Activated CD8-positive, alpha-beta memory T cell treated with anti-CD3 and anti-CD28 coated beads, Interleukin-2, amount 10 ng/mL, durations not matched to agents 7 days and 5 days (primary cell): ENCODE measurements at regions of chr13 and their contacts with region 1.

Region 1: GRCh38 chr13:49922301-49922700 is 13.8 kb downstream of the SPRYD7 start:
- DNase-seq: no peak
- ATAC-seq: no peak
- H3K4me3 Mint-ChIP-seq: no peak overlapping the region
- H3K27ac Mint-ChIP-seq: no peak overlapping the region
- H3K4me1 Mint-ChIP-seq: no peaks in the 10 kb centered on the region
- H3K27me3 Mint-ChIP-seq: no peaks in the 10 kb centered on the region

Region 2: GRCh38 chr13:49936085-49936940 is 14.0 kb after region 1 on chr13 and contains the start of gene SPRYD7:
- CTCF ChIA-PET with region 1: interaction called, 11 read pairs
- DNase-seq: peak; percentile 97
- ATAC-seq: peak; percentile 98
- H3K4me3 Mint-ChIP-seq: peak within 1 kb of the TSS; percentile 96
- H3K27ac Mint-ChIP-seq: peak within 1 kb of the TSS; percentile 83
- H3K4me1 Mint-ChIP-seq: peaks cover 17% of the 10 kb centered on the region
- H3K27me3 Mint-ChIP-seq: no peaks in the 10 kb centered on the region
- total RNA-seq, gene SPRYD7: 3.3 to 6.0 TPM